ENCODE measurements at regions of chr18 and their contacts with region 1.

Region 1: DNA sequence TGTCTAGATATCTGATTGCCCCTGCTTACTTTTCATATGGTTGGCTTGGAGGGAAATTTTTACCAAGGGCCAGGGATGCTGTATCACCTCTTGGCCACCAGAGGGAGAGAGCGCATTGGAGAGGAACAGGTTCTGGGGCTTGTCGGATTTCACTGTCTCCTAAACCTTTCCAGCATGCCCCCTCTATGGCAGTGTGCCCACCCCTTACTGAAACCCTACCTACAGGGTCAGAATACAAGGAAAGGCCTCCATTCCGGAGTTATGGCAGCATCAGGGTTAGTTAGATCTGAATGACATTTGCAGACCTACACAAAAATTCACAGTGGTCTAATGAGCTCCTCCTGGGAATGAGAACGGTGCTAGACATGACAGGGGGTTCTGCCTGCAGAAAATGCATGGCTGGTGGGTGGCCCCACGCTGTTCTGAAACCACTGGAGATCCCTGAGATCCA is 5.8 kb downstream of the SLC14A2 start:
- DNase-seq: peak in 1 of 2 experiments; percentile 26
- H3K4me3 ChIP-seq: no peak overlapping the region
- H3K4me3 Mint-ChIP-seq: no peak overlapping the region
- H3K27ac Mint-ChIP-seq: no peak overlapping the region
- H3K4me1 ChIP-seq: no peaks in the 10 kb centered on the region
- H3K4me1 Mint-ChIP-seq: no peaks in the 10 kb centered on the region
- H3K27me3 ChIP-seq: no peaks in the 10 kb centered on the region
- H3K27me3 Mint-ChIP-seq: no peaks in the 10 kb centered on the region
- CTCF ChIP-seq: peak; percentile 47 to 88

Region 2: GRCh38 chr18:45664824-45665763 is 44.0 kb after region 1 on chr18:
- CTCF ChIA-PET with region 1: no interaction called
- POLR2A ChIA-PET with region 1: no interaction called
- intact Hi-C with region 1: loop called (anchors 1 kb)
- DNase-seq: peak in 1 of 2 experiments; percentile 49
- H3K4me3 ChIP-seq: no peak overlapping the region
- H3K4me3 Mint-ChIP-seq: no peak overlapping the region
- H3K27ac Mint-ChIP-seq: no peak overlapping the region
- H3K4me1 ChIP-seq: no peaks in the 10 kb centered on the region
- H3K4me1 Mint-ChIP-seq: peaks cover 6% of the 10 kb centered on the region
- H3K27me3 ChIP-seq: no peaks in the 10 kb centered on the region
- H3K27me3 Mint-ChIP-seq: no peaks in the 10 kb centered on the region
- CTCF ChIP-seq: peak; percentile 61 to 63